PC-9 (cell line): ENCODE measurements at regions of chr20 and their contacts with region 1.

Region 1: GRCh38 chr20:11387189-11387754 is 530.4 kb upstream of the BTBD3 start:
- DNase-seq: peak; percentile 55 to 73
- H3K4me3 ChIP-seq: no peak overlapping the region
- H3K27ac ChIP-seq: peak overlapping the region; percentile 85
- H3K4me1 ChIP-seq: peaks cover 23% of the 10 kb centered on the region
- H3K27me3 ChIP-seq: no peaks in the 10 kb centered on the region
- CTCF ChIP-seq: no peak

Region 2: GRCh38 chr20:10832141-10832540 is 555.1 kb before region 1 on chr20:
- CTCF ChIA-PET with region 1: no interaction called
- POLR2A ChIA-PET with region 1: no interaction called
- intact Hi-C with region 1: no loop called
- DNase-seq: no peak
- H3K4me3 ChIP-seq: no peak overlapping the region
- H3K27ac ChIP-seq: no peak overlapping the region
- H3K4me1 ChIP-seq: no peaks in the 10 kb centered on the region
- H3K27me3 ChIP-seq: no peaks in the 10 kb centered on the region
- CTCF ChIP-seq: no peak

Region 3: DNA sequence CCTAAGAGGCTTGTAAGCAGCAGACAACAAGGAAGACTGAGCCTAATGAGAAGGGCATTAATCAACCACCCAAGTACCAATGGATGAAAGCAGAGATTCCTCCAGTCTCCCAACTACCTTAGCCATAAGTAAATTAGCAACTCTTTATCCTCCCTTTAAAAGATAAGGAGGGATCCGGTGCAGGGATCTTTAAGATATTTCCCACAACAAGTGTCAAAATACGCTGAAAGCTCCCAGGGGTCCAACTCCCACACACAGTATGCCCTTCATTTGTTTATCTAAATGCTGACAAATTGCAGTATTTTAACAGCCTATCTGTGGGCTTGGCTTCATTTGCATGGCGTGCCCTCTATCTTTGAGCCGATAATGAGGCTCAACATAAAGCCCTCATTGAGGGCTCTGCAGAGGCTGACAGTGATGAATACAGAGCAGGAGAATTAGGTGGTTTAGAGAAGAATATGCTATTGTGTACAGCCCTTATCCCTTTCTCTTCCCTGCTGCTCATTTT is 138.5 kb before region 1 on chr20:
- CTCF ChIA-PET with region 1: no interaction called
- POLR2A ChIA-PET with region 1: interaction called, 12 read pairs
- intact Hi-C with region 1: no loop called
- DNase-seq: no peak
- H3K4me3 ChIP-seq: no peak overlapping the region
- H3K27ac ChIP-seq: no peak overlapping the region
- H3K4me1 ChIP-seq: no peaks in the 10 kb centered on the region
- H3K27me3 ChIP-seq: no peaks in the 10 kb centered on the region
- CTCF ChIP-seq: no peak

Region 4: GRCh38 chr20:11274141-11274594 is 113.1 kb before region 1 on chr20:
- CTCF ChIA-PET with region 1: no interaction called
- POLR2A ChIA-PET with region 1: no interaction called
- intact Hi-C with region 1: loop called (anchors 5 kb)
- DNase-seq: peak; percentile 30 to 61
- H3K4me3 ChIP-seq: no peak overlapping the region
- H3K27ac ChIP-seq: no peak overlapping the region
- H3K4me1 ChIP-seq: peaks cover 3% of the 10 kb centered on the region; the same call in 1 of the 2 replicates
- H3K27me3 ChIP-seq: no peaks in the 10 kb centered on the region
- CTCF ChIP-seq: peak; percentile 76

Region 5: GRCh38 chr20:11454966-11455799 is 67.9 kb after region 1 on chr20:
- CTCF ChIA-PET with region 1: no interaction called
- POLR2A ChIA-PET with region 1: no interaction called
- intact Hi-C with region 1: loop called (anchors 1 kb)
- DNase-seq: peak; percentile 49 to 90
- H3K4me3 ChIP-seq: peak overlapping the region; percentile 13; the same call in 1 of the 2 replicates
- H3K27ac ChIP-seq: peak overlapping the region; percentile 89
- H3K4me1 ChIP-seq: peaks cover 42% of the 10 kb centered on the region
- H3K27me3 ChIP-seq: no peaks in the 10 kb centered on the region
- CTCF ChIP-seq: no peak

Region 6: GRCh38 chr20:11496380-11496779 is 109.1 kb after region 1 on chr20:
- CTCF ChIA-PET with region 1: no interaction called
- POLR2A ChIA-PET with region 1: no interaction called
- intact Hi-C with region 1: no loop called
- DNase-seq: peak in 1 of 2 experiments; percentile 10
- H3K4me3 ChIP-seq: no peak overlapping the region
- H3K27ac ChIP-seq: no peak overlapping the region
- H3K4me1 ChIP-seq: 0 out of 2 replicates have a peak, but pooled peaks cover 4% of the 10 kb centered on the region
- H3K27me3 ChIP-seq: no peaks in the 10 kb centered on the region
- CTCF ChIP-seq: no peak

Region 7: DNA sequence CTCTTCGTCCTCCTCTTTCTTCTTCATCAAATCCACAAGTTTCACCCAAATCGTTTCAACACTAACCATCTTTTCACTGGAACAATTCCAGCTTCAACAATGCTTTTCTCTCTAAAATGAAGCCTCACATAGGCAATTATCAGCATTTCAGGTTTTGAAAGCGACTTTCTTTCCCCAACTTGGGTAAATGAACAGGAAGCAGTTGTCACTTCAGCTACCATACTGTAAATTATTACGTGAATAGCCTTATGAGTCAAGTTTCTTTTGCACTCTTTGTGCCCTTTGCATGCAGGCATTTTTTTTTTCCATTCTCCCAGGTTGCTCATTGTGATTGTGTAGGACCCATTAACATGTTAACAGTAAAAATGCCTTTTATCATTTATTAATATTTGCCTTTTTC is 408.8 kb after region 1 on chr20:
- CTCF ChIA-PET with region 1: no interaction called
- POLR2A ChIA-PET with region 1: no interaction called
- intact Hi-C with region 1: loop called (anchors 5 kb)
- DNase-seq: no peak
- H3K4me3 ChIP-seq: no peak overlapping the region
- H3K27ac ChIP-seq: no peak overlapping the region
- H3K4me1 ChIP-seq: peaks cover 51% of the 10 kb centered on the region
- H3K27me3 ChIP-seq: no peaks in the 10 kb centered on the region
- CTCF ChIP-seq: no peak